ENCODE measurements at regions of chr2 and their contacts with region 1.

Region 1: DNA sequence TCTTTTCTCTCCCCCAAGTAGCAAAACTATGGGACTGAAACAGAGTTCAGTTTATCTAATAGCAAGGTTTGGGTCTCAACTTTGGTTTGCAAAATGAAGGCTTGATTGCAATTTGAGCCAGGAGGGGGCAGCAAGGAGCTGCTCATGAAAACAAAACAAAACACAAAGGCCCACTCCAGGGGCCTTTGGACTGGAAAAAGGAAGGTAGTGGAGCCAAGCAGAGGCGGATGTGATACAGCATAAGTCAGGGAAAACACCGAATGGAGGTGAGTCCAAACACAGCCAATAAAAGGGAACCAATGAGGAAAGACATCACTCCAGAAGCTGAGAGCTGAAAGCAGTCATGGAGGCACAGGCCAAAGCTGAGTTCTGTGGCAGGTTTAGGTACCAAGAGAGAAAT is 799.7 kb upstream of the ACVR2A start:
- DNase-seq: peak; percentile 60
- H3K4me3 Mint-ChIP-seq: no peak overlapping the region
- H3K27ac Mint-ChIP-seq: no peak overlapping the region
- H3K4me1 Mint-ChIP-seq: peaks cover 3% of the 10 kb centered on the region
- H3K27me3 Mint-ChIP-seq: peaks cover 5% of the 10 kb centered on the region

Region 2: GRCh38 chr2:147068071-147068470 is 23.0 kb after region 1 on chr2:
- CTCF ChIA-PET with region 1: no interaction called
- DNase-seq: no peak
- H3K4me3 Mint-ChIP-seq: no peak overlapping the region
- H3K27ac Mint-ChIP-seq: no peak overlapping the region
- H3K4me1 Mint-ChIP-seq: no peaks in the 10 kb centered on the region
- H3K27me3 Mint-ChIP-seq: peaks cover 3% of the 10 kb centered on the region

Region 3: DNA sequence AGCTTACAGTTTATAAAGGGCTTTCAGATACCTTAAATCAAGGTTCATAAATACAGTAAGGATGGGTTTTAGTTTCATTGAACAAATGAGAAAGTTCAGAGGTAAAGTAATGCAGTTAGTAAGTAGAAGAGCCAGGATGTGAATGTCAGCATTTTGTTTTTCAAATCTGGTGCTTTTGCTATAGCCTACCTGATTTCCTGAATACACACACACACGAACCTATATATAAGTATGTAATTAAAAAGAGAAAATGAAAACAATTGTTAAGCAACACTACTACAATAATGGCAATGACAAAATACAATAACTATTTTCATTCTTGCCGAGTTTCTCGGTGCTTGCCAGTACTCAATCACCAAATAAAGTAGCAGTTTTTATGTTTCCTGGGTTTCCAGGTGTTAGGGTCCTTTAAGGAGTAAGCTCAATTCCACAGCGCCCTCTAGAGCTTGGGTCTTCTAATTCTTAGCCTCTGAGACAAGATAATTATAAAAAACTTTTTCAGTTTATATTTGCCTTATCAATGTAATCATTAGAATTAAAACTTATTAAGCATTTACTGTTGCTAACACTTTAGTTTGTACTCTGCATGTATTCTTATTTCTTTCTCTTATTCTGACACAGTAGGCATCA is 286.8 kb after region 1 on chr2:
- CTCF ChIA-PET with region 1: interaction called, 13 read pairs
- DNase-seq: peak; percentile 67
- H3K4me3 Mint-ChIP-seq: no peak overlapping the region
- H3K27ac Mint-ChIP-seq: peak overlapping the region; percentile 63
- H3K4me1 Mint-ChIP-seq: peaks cover 35% of the 10 kb centered on the region
- H3K27me3 Mint-ChIP-seq: peaks cover 3% of the 10 kb centered on the region

Region 4: DNA sequence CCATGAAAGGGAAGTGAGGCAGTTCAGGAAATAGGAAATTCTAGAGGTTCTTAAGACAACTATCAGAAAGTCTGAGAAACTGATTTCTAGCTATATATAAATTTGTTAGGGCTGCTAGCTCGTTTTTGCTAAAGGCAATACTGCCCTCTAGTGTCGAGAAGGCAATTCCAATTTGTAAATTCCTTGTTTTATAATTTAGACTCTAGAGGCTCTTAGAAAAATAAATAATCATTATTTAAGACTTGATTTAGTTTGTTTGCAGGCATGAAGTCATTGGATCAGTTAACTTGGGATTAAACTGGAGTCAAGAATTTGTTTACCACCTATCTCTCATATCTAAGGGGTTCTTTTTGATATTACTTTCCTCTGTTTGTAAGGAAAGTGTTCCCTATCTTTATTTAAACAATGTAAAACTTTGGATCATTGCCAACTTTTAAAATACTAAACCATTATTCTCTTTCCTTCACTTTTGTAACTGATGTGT is 865.9 kb after region 1 on chr2:
- CTCF ChIA-PET with region 1: interaction called, 33 read pairs
- DNase-seq: peak; percentile 50
- H3K4me3 Mint-ChIP-seq: no peak overlapping the region
- H3K27ac Mint-ChIP-seq: no peak overlapping the region
- H3K4me1 Mint-ChIP-seq: peaks cover 12% of the 10 kb centered on the region
- H3K27me3 Mint-ChIP-seq: no peaks in the 10 kb centered on the region